ENCODE measurements at regions of chr20 and their contacts with region 1.

Region 1: DNA sequence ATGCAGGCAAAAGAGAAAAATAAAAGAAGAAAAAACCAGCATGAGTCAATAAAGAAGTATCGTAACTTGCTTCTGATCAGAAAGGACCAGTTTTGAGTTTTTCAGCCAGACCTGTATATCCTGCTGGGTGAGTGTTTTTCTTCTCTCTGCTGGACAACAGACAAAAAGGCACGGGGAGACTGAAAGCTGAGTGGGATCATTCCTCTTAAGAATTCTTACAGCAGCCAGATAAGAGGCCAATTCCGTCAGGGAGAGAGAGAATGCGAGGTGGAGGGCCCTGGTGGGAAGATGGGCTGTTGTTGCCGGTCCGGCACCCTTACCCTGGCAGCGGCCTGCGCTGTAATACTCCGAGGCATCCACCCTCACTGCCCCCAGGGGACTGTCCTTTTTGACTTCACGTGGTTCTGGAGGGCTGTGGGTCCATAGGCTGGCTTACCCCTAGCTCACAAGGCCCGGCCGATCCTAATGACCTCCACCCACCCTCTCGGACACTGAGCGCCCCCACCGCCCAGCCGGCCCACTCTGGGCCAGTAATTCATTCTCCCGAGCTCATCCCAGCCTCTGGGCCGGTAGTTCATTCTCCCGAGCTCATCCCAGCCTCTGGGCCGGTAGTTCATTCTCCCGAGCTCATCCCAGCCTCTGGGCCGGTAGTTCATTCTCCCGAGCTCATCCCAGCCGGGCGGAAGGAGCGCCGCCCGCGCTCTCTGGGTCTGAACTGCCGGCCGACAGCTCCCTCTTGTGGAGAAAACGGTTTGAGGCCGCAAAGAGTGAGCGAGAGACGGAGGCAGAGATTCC is 118.3 kb upstream of the SIRPA start:
- DNase-seq: peak; percentile 54
- ATAC-seq: peak; percentile 99
- H3K4me3 ChIP-seq: peak overlapping the region; percentile 57 to 70
- H3K27ac ChIP-seq: peak overlapping the region; percentile 40; the same call in 1 of the 2 replicates
- H3K4me1 ChIP-seq: peaks cover 6% of the 10 kb centered on the region
- H3K27me3 ChIP-seq: peaks cover 3% of the 10 kb centered on the region; the same call in 1 of the 2 replicates
- CTCF ChIP-seq: peak; percentile 87

Region 2: DNA sequence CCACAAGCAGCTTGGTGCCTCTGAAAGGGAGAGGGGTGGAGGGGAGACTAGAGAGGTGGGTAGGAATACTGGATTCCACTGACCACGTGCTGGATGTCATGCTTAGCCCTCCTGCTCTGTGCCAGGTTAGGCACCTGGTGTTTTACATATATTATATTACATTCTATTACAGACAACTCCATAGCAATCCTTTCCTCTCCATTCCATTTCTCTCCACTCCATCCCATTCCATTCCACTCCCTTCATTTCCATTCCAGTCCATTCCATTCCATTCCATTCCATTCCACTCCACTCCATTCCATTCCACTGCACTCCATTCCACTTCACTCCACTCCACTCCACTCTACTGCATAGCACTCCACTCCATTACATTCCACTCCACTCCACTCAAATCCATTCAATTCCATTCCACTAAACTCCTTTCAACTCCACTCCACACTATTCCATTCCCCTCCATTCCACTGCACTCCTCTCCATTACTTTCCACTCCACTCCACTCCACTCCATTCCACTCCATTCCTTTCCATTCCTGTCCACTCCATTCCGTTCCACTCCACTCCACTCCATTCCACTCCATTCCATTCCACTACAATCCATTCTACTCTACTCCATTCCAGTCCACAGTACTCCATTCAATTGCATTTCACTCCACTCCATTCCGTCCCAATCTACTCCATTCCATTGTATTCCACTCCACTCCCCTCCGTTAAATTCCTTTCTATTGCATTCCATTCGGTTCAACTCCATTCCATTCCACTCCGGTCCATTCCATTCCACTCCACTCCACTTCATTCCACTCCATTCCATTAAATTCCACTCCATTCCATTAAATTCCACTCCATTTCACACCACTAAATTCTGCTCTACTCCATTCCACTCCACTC is 1716.6 kb before region 1 on chr20:
- CTCF ChIA-PET with region 1: no interaction called
- POLR2A ChIA-PET with region 1: no interaction called
- in situ Hi-C with region 1: no loop called
- intact Hi-C with region 1: no loop called
- DNase-seq: no peak
- ATAC-seq: peak; percentile 38; the same call in 1 of the 2 replicates
- H3K4me3 ChIP-seq: no peak overlapping the region
- H3K27ac ChIP-seq: no peak overlapping the region
- H3K4me1 ChIP-seq: no peaks in the 10 kb centered on the region
- H3K27me3 ChIP-seq: no peaks in the 10 kb centered on the region
- CTCF ChIP-seq: no peak

Region 3: DNA sequence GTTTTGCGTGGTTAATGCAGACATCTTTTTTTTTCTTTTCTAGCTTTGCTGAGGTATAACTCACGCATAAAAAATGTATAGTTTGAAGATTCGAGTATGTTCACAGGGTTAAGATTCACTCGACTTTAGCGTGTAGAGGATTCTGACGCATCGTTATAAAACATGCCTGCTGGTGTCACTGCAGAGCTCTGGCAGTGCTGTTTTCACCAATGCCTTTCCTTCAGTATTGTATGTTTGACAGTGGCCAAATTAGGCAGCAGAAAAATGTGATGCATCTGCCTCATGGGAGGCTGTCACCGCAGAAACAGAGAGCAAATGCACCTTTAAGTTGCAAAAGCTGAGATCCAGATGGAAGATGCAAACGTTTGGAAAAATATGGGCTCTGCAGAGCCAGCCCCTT is 267.6 kb before region 1 on chr20:
- CTCF ChIA-PET with region 1: interaction called, 19 read pairs
- POLR2A ChIA-PET with region 1: no interaction called
- in situ Hi-C with region 1: no loop called
- intact Hi-C with region 1: loop called (anchors 10 kb)
- DNase-seq: peak; percentile 12
- ATAC-seq: peak; percentile 86
- H3K4me3 ChIP-seq: no peak overlapping the region
- H3K27ac ChIP-seq: no peak overlapping the region
- H3K4me1 ChIP-seq: no peaks in the 10 kb centered on the region
- H3K27me3 ChIP-seq: peaks cover 40% of the 10 kb centered on the region
- CTCF ChIP-seq: peak; percentile 73

Region 4: DNA sequence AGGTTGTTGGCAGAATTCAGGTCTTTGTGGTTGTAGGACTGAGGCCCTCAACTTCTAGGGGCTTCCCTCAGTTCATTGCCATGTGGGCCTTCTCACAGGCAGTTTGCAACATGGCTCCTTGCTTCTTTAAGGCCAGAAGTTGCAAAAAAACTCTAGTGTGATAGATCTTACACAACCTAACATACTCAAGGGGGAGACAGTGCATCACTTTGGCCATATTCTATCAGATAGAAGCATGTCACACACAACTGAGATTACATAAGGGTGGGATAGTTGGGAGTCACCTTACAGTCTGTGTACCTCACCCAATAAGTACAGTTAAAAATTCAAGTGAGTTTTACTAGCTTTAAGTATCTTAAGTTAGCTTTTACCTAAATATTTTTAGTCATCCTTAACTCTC is 220.9 kb before region 1 on chr20:
- CTCF ChIA-PET with region 1: no interaction called
- POLR2A ChIA-PET with region 1: no interaction called
- in situ Hi-C with region 1: no loop called
- intact Hi-C with region 1: no loop called
- DNase-seq: no peak
- ATAC-seq: no peak
- H3K4me3 ChIP-seq: no peak overlapping the region
- H3K27ac ChIP-seq: no peak overlapping the region
- H3K4me1 ChIP-seq: no peaks in the 10 kb centered on the region
- H3K27me3 ChIP-seq: 0 out of 2 replicates have a peak, but pooled peaks cover under 1% of the 10 kb centered on the region
- CTCF ChIP-seq: 0 out of 2 replicates have a peak, but pooled peaks have one; percentile 7

Region 5: DNA sequence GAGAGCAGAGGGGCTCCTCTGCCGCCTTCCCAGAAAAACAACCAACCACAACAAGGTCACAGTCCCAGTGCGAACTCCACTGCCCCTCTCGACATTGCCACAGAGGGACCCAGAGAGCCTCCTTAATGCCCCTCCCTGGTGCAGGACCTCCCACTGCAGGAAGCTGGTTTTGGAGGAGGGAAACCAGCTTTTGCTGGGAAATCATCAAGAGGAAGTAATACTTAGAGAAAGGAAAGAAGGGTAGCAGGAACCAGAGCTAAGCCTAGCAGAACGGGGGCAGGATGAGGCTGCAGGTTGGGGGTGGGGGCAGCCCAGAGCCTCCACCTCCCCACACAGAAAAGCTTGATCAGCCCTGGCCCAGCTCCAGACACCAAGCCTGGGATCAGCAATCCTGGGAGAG is 80.6 kb after region 1 on chr20:
- CTCF ChIA-PET with region 1: no interaction called
- POLR2A ChIA-PET with region 1: interaction called, 12 read pairs
- in situ Hi-C with region 1: no loop called
- intact Hi-C with region 1: no loop called
- DNase-seq: no peak
- ATAC-seq: no peak
- H3K4me3 ChIP-seq: no peak overlapping the region
- H3K27ac ChIP-seq: no peak overlapping the region
- H3K4me1 ChIP-seq: no peaks in the 10 kb centered on the region
- H3K27me3 ChIP-seq: no peaks in the 10 kb centered on the region; the same call in 1 of the 2 replicates
- CTCF ChIP-seq: no peak

Measured in Panc1 (cell line).